ENCODE measurements at regions of chr2 and their contacts with region 1.

Region 1: DNA sequence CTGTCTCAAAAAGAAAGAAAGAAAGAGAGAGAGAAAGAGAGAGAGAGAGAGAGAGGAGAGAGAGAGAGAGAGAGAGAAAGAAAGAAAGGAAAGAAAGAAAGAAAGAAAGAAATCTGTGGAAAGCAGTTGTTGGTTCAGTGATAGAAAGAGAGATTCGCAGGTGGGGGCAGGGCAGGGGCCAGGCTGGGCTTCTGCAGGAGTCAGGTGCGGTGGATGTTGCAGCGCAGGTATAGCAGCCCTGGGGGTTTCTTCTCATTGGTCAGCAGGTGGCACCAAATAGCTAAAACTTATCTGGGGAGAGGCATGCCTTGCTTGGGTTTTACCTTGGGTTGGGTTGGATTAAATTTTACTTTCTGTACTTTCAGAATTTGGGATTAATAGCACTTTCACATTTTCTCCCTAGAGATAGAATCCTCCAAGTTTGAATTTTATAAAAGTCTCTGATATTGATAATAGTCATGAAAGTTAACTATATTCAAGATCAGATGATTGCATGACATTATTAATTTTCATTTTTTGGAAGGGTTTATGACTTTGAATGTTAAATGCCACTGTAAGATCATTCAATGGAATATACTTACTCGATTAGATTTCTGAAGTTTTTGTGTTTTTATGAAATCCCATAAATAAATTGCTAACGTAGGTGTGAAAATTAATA is 66.6 kb downstream of the SPTBN1 start:
- DNase-seq: peak; percentile 64 to 79
- ATAC-seq: peak; percentile 91 to 93
- H3K4me3 ChIP-seq: no peak overlapping the region
- H3K27ac ChIP-seq: peak overlapping the region; percentile 41 to 74; a peak in 5 of 6 replicates
- H3K4me1 ChIP-seq: peaks cover 45% of the 10 kb centered on the region
- CTCF ChIP-seq: peak; percentile 85
- EP300 ChIP-seq: no peak
- POLR2A ChIP-seq: no peak
- RAD21 ChIP-seq: peak; percentile 95 to 96

Region 2: GRCh38 chr2:54106631-54107454 is 415.9 kb before region 1 on chr2:
- CTCF ChIA-PET with region 1: interaction called, 11 read pairs
- POLR2A ChIA-PET with region 1: no interaction called
- DNase-seq: peak; percentile 51 to 72
- ATAC-seq: peak; percentile 83 to 88
- H3K4me3 ChIP-seq: no peak overlapping the region
- H3K27ac ChIP-seq: peak overlapping the region in 1 of 2 experiments; percentile 22; a peak in 1 of 6 replicates
- H3K4me1 ChIP-seq: peaks cover 19% of the 10 kb centered on the region
- CTCF ChIP-seq: peak; percentile 94
- EP300 ChIP-seq: no peak
- POLR2A ChIP-seq: no peak
- RAD21 ChIP-seq: peak; percentile 92 to 94

Region 3: GRCh38 chr2:54455563-54456361 is 67.0 kb before region 1 on chr2 and contains the start of gene SPTBN1:
- CTCF ChIA-PET with region 1: no interaction called
- POLR2A ChIA-PET with region 1: no interaction called
- DNase-seq: peak; percentile 76 to 91
- ATAC-seq: peak; percentile 83 to 89
- H3K4me3 ChIP-seq: peak within 1 kb of the TSS; percentile 90
- H3K27ac ChIP-seq: peak within 1 kb of the TSS; percentile 89 to 96
- H3K4me1 ChIP-seq: peaks cover 38% of the 10 kb centered on the region
- CTCF ChIP-seq: no peak
- EP300 ChIP-seq: no peak
- POLR2A ChIP-seq: peak; percentile 79
- RAD21 ChIP-seq: no peak
- polyA plus RNA-seq, gene SPTBN1: 126 and 201 TPM in 2 replicates

Region 4: GRCh38 chr2:54504866-54505265 is 17.9 kb before region 1 on chr2:
- CTCF ChIA-PET with region 1: interaction called, 14 read pairs
- POLR2A ChIA-PET with region 1: no interaction called
- DNase-seq: no peak
- ATAC-seq: no peak
- H3K4me3 ChIP-seq: no peak overlapping the region
- H3K27ac ChIP-seq: no peak overlapping the region
- H3K4me1 ChIP-seq: peaks cover 12% of the 10 kb centered on the region; the same call in 2 of the 3 replicates
- CTCF ChIP-seq: no peak
- EP300 ChIP-seq: no peak
- POLR2A ChIP-seq: no peak
- RAD21 ChIP-seq: no peak

Region 5: GRCh38 chr2:54558188-54559005 is 35.6 kb after region 1 on chr2:
- CTCF ChIA-PET with region 1: interaction called, 91 read pairs
- POLR2A ChIA-PET with region 1: interaction called, 12 read pairs
- DNase-seq: peak; percentile 61 to 78
- ATAC-seq: peak; percentile 73 to 79
- H3K4me3 ChIP-seq: peak overlapping the region; percentile 67
- H3K27ac ChIP-seq: peak overlapping the region; percentile 91 to 92
- H3K4me1 ChIP-seq: peaks cover 53% of the 10 kb centered on the region
- CTCF ChIP-seq: no peak
- EP300 ChIP-seq: 0 out of 5 replicates have a peak, but pooled peaks of 1 of the 2 experiments have one; percentile 21
- POLR2A ChIP-seq: peak; percentile 7; the same call in 1 of the 2 replicates
- RAD21 ChIP-seq: no peak; a peak in 2 of 5 replicates

Region 6: DNA sequence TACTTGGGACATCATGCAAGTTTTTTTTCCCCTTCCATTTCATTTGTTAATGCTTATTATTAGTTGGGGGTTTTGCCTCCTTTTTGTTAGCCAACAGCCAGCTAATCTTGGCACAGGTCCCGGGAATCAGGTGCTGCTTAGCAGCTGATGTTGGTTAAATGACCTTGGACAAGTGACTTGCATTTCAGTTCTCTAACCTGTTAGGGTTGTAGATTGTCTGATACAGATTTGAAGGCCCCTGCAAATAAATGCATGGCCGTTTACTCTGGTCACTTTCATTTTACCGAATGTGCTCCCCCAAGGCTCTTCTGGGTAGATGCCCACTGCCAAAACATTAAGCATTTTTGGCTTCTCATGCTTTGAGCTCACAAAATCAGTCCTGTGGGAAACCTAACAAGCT is 54.3 kb after region 1 on chr2:
- CTCF ChIA-PET with region 1: interaction called, 11 read pairs
- POLR2A ChIA-PET with region 1: interaction called, 3 read pairs
- DNase-seq: peak in 1 of 2 experiments; percentile 47
- ATAC-seq: no peak
- H3K4me3 ChIP-seq: no peak overlapping the region
- H3K27ac ChIP-seq: peak overlapping the region; percentile 60 to 97
- H3K4me1 ChIP-seq: peaks cover 95% of the 10 kb centered on the region
- CTCF ChIP-seq: no peak
- EP300 ChIP-seq: 0 out of 5 replicates have a peak, but pooled peaks of 1 of the 2 experiments have one; percentile 10
- POLR2A ChIP-seq: no peak
- RAD21 ChIP-seq: no peak

Region 7: DNA sequence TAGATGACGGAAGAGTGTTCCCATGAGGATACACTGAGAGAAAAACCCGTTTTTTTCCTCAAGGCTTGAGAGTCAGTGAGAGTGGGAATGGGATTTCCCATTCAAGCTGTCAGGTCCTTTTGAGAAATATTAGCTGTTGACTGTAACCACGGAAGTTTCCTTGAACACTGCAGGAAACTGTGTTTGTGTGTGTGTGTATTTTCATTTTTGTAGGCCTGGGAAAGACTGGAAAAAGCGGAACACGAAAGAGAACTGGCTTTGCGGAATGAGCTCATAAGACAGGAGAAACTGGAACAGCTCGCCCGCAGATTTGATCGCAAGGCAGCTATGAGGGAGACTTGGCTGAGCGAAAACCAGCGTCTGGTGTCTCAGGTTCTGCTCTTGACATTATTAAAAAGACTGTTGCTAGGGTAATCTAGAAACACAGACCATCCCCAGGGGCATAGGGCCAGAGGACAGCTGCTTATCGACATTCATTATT is 101.9 kb after region 1 on chr2:
- CTCF ChIA-PET with region 1: interaction called, 10 read pairs
- POLR2A ChIA-PET with region 1: no interaction called
- DNase-seq: no peak
- ATAC-seq: no peak
- H3K4me3 ChIP-seq: no peak overlapping the region
- H3K27ac ChIP-seq: no peak overlapping the region
- H3K4me1 ChIP-seq: peaks cover 6% of the 10 kb centered on the region
- CTCF ChIP-seq: no peak
- EP300 ChIP-seq: no peak
- POLR2A ChIP-seq: no peak
- RAD21 ChIP-seq: no peak

Region 8: GRCh38 chr2:54665436-54665856 is 142.7 kb after region 1 on chr2:
- CTCF ChIA-PET with region 1: interaction called, 12 read pairs
- POLR2A ChIA-PET with region 1: no interaction called
- DNase-seq: peak in 1 of 2 experiments; percentile 73
- ATAC-seq: peak; percentile 32 to 73; a peak in 4 of 6 replicates
- H3K4me3 ChIP-seq: no peak overlapping the region
- H3K27ac ChIP-seq: peak overlapping the region; percentile 34 to 53; a peak in 5 of 6 replicates
- H3K4me1 ChIP-seq: peaks cover 45% of the 10 kb centered on the region
- CTCF ChIP-seq: peak; percentile 66
- EP300 ChIP-seq: no peak
- POLR2A ChIP-seq: no peak
- RAD21 ChIP-seq: peak; percentile 24 to 42; a peak in 2 of 5 replicates

Region 9: DNA sequence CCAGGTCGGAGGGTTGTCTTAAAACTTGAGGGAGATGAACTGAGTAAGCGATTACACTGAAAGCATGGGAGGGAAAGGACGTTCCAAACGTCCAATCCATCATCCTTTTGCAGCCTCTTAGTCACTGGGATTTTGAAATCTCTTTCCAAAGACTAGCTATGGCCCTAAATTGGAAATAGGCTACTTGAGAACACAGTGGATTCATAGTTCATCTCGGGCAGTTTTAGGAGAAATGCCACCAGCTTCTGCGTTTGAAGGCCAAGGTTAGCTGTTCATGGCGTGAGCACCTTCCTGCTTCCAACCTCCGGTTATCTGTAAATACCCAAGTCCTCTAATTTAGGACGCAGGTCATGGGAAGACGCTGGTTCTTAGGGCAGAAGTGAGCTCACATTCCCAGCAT is 199.9 kb after region 1 on chr2:
- CTCF ChIA-PET with region 1: no interaction called
- POLR2A ChIA-PET with region 1: no interaction called
- DNase-seq: peak; percentile 10 to 38
- ATAC-seq: no peak
- H3K4me3 ChIP-seq: peak overlapping the region; percentile 49
- H3K27ac ChIP-seq: peak overlapping the region; percentile 62 to 85
- H3K4me1 ChIP-seq: peaks cover 5% of the 10 kb centered on the region; the same call in 2 of the 3 replicates
- CTCF ChIP-seq: no peak
- EP300 ChIP-seq: no peak
- POLR2A ChIP-seq: no peak
- RAD21 ChIP-seq: no peak